Ascending aorta (tissue), 2 donors: ENCODE measurements at regions of chr13 and their contacts with region 1.

Region 1: GRCh38 chr13:45974500-45974899 is 78.0 kb downstream of the ZC3H13 start:
- DNase-seq: no peak
- H3K4me3 ChIP-seq: no peak overlapping the region
- H3K27ac ChIP-seq: no peak overlapping the region
- H3K4me1 ChIP-seq: no peaks in the 10 kb centered on the region
- H3K27me3 ChIP-seq: no peaks in the 10 kb centered on the region
- CTCF ChIP-seq: no peak

Region 2: DNA sequence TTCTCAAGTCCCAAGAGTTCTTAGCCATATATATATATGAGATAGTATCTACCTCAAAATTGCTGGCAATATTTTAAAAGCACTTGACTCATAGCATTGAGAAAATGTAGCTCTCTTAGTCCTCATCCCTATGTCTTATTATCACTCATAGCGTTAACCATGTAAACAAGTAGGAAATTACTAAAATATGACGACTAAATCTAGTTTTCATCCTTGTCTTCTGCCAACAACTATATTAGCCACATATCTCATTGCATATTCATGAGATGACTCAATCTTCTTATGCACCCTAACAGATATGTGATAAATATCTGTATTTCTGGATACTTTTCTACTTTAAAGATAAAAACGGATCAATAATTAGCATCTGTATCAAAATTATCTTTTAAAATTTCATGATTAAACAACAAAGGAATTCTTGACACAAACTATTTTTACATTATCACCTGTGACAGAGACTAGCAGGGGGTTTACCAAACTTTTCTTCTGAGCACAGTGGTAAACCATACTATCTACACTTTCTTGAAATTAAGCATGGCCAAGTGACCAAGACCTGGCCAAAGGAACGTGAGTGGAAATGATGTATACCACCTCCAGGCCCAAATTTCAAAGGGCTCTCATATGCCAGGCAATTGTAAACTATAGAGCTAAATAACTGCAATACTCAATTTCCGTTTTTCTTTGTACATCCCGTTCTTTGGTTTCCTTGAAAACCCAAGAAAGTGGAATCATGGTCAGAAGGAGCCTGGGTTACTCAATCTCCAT is 32.4 kb after region 1 on chr13:
- intact Hi-C with region 1: loop called (anchors 1 kb)
- DNase-seq: no peak
- H3K4me3 ChIP-seq: no peak overlapping the region
- H3K27ac ChIP-seq: no peak overlapping the region
- H3K4me1 ChIP-seq: no peaks in the 10 kb centered on the region
- H3K27me3 ChIP-seq: no peaks in the 10 kb centered on the region
- CTCF ChIP-seq: no peak